ENCODE measurements at regions of chr1 and their contacts with region 1.

Region 1: DNA sequence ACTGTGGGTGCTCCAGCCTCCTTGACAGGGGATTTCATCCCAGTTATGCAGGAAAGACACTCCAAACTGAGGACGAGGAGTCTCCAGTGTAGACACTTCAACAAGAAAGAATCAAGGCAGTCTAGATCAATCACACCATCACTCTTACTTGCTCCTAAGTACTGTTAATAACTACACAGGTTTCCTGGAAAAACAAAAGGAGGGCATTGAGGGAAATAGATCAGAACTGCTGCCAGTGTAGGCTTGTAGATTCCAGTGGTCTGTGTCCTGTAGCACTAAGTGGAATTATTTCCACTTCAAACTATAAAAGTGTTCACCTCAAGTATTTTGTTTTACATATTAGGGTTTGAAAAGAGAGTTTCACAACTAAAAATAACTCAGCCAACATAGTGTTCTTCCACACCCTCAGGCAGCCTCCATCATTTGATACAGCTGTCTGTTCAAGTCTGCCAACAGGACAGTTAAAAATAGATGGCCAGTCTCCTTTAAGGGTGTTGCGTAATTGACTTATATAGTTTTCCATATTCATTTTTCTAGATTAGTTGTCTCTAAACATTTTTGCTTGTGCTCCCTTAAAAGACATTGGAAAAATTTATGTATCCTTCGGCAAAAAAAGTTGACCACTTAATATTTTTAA is 32.0 kb upstream of the AGL start:
- DNase-seq: no peak
- H3K4me3 ChIP-seq: no peak overlapping the region
- H3K27ac ChIP-seq: no peak overlapping the region
- H3K4me1 ChIP-seq: peaks cover 0 to 7% (median 0%) of the 10 kb centered on the region in 3 donors
- H3K27me3 ChIP-seq: no peaks in the 10 kb centered on the region
- CTCF ChIP-seq: no peak
- POLR2A ChIP-seq: no peak

Region 2: DNA sequence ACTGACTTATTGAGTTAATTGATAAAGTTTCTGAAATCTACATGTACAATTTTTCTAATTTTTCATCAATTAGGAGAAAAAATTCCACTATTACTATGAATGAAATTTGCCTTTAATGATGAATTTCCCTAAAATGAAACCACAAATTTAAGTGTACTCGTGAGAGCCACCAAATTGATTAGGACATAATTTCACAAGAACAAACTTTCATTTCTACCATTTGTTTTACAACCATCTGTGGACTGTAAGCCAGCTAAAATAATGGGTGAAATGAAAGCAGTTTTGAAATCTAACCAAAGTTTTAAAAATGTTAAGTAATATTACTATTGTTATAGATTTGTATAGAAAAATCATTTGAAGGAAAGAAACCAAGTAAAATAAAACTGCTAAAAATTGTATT is 73.8 kb after region 1 on chr1:
- intact Hi-C with region 1: no loop called
- DNase-seq: no peak
- H3K4me3 ChIP-seq: no peak overlapping the region
- H3K27ac ChIP-seq: no peak overlapping the region
- H3K4me1 ChIP-seq: no peaks in the 10 kb centered on the region
- H3K27me3 ChIP-seq: no peaks in the 10 kb centered on the region
- CTCF ChIP-seq: no peak
- POLR2A ChIP-seq: no peak

Region 3: DNA sequence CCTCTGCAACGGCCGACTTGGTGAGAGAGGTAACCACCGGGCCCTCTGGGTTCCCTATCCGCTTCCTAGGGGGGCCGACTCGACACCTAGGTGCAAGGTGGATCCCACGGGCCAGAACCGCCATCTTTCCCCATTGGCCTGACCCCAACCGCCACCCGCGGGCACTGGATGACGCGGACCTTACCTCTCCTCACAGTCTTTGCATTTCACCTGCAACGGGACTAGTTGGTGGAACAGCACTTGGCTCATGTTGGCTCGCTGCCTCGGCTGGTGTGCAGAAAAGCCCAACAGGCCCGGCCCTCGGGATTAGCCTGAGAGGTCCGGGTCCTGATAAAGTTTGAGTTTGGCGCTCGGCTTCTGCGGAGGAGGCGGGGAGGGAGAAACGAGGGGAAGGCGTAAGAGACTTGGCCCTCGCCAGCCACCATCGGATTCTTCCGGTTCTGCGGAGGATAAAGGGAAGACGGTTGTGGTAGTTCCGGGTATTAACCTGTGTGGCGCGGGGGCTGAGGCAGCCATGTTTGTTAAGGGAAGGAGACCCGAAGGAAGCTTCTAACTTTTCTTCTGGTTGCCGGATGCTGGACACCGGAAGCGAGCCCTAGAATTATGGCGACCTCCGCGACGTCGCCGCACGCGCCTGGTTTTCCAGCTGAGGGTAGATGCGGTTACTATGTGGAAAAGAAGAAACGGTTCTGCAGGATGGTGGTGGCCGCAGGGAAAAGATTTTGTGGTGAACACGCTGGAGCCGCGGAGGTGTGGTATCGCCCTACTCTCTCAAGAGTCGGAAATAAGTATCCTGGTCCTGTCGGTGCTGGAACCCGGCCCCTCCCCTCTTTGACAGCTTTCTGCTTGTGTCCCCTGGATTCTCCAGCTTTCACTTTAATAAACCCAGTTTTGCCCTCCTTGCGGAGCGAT is 314.6 kb after region 1 on chr1 and contains the starts of genes SASS6 and TRMT13:
- intact Hi-C with region 1: loop called (anchors 10 kb)
- DNase-seq: peak; percentile 78
- H3K4me3 ChIP-seq: peak within 1 kb of the TSS; percentile 81 to 92 (median 82)
- H3K27ac ChIP-seq: peak within 1 kb of the TSS; percentile 72 to 85 (median 80)
- H3K4me1 ChIP-seq: peaks cover 12 to 49% (median 17%) of the 10 kb centered on the region in 3 donors
- H3K27me3 ChIP-seq: no peaks in the 10 kb centered on the region
- CTCF ChIP-seq: peak in 3 of 6 experiments; percentile 9 to 30 (median 28)
- POLR2A ChIP-seq: peak in 1 of 4 donors; percentile 33
- total RNA-seq, gene SASS6: 1.9 to 6.8 (median 3.8) TPM
- total RNA-seq, gene TRMT13: 7.8 to 28.8 (median 11.8) TPM

Measured in esophagus squamous epithelium (tissue), 5 donors.